Left ventricle myocardium inferior (tissue), 1 donor: ENCODE measurements at regions of chr1 and their contacts with region 1.

Region 1: GRCh38 chr1:67532452-67533216 is 102.4 kb upstream of the SERBP1 start:
- DNase-seq: no peak
- H3K4me3 ChIP-seq: no peak overlapping the region
- H3K27ac ChIP-seq: no peak overlapping the region
- H3K4me1 ChIP-seq: peaks cover 10% of the 10 kb centered on the region
- H3K27me3 ChIP-seq: no peaks in the 10 kb centered on the region
- CTCF ChIP-seq: peak; percentile 84

Region 2: DNA sequence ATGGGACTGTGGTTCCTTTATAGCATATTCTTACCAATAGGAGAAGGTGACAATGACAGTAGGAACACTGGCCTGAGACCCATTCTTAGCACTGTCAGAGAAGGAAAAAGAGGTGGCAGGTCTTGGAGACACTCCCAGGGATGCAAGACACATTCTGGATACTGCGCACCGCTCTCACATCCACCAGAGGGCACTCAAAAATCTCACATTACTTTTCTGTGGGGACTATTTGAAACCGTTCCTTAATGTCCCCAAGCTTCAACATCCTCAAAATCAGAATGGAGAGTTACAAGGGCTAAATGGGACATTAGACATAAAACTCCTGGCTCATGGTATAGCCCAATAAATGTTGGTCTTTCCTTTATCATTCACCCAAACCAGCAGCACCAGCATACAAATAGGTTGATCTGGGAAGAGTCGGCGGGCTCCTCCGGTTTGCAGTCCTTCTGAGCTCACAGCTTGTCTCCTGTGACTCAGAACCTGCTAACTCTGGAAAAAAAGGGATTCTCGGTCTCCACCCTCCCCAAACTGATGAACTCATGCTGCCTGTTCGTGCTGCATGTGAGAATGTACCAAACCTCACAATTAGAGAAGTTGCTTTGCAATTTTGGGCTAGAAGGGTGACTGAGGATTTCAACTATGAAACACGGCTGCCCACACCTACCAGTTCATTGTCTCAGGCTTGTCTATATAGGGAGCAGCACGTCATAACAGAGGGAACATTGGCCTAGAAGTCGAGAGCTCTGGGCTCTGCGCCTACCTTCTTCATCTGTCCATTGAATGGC is 184.8 kb before region 1 on chr1:
- intact Hi-C with region 1: no loop called
- DNase-seq: peak; percentile 20
- H3K4me3 ChIP-seq: no peak overlapping the region
- H3K27ac ChIP-seq: no peak overlapping the region
- H3K4me1 ChIP-seq: no peaks in the 10 kb centered on the region
- H3K27me3 ChIP-seq: peaks cover 6% of the 10 kb centered on the region
- CTCF ChIP-seq: peak; percentile 82

Region 3: DNA sequence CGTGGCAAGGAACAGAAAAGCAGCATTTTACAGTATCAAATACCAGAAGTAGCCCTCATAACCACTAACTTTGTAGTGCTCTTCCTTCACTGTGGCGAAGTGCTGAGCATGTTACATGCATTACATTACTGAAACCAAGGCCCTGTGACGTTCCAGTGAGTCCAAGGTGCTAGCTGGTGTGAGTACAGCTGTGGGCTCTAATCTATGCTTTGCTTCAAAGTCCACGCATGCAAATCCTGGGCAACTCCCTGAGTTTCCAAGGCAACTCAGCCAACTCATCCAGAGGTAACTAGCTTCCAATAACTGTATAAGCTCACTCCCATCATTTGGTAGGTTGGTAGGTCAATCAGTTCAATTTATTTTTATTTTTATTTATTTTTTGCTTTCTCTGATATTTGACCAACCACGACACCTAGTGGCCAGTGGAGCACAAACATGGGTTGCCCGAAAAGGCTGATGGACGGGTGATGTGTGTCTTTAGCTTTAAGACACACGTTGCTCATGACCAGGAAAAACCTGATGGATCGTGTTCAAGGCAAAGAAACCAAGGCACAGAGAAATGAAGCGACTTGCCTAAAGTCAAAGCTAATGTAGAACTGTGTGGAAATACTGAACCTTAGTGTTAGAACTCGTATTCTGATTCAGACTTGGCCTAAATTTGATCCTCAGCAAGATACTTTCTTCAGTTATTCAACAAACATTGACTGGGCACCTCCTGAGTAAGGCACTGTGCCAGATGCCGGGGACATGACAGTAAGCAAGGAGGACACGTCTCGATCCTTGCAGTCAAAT is 227.6 kb after region 1 on chr1:
- intact Hi-C with region 1: loop called (anchors 5 kb)
- DNase-seq: peak; percentile 31
- H3K4me3 ChIP-seq: no peak overlapping the region
- H3K27ac ChIP-seq: peak overlapping the region; percentile 46
- H3K4me1 ChIP-seq: peaks cover 40% of the 10 kb centered on the region
- H3K27me3 ChIP-seq: no peaks in the 10 kb centered on the region
- CTCF ChIP-seq: peak; percentile 91

Region 4: GRCh38 chr1:67880056-67880601 is 347.5 kb after region 1 on chr1:
- intact Hi-C with region 1: no loop called
- DNase-seq: no peak
- H3K4me3 ChIP-seq: no peak overlapping the region
- H3K27ac ChIP-seq: no peak overlapping the region
- H3K4me1 ChIP-seq: peaks cover 12% of the 10 kb centered on the region
- H3K27me3 ChIP-seq: no peaks in the 10 kb centered on the region
- CTCF ChIP-seq: no peak